Mammary epithelial cell (primary cell): ENCODE measurements at regions of chr15 and their contacts with region 1.

Region 1: DNA sequence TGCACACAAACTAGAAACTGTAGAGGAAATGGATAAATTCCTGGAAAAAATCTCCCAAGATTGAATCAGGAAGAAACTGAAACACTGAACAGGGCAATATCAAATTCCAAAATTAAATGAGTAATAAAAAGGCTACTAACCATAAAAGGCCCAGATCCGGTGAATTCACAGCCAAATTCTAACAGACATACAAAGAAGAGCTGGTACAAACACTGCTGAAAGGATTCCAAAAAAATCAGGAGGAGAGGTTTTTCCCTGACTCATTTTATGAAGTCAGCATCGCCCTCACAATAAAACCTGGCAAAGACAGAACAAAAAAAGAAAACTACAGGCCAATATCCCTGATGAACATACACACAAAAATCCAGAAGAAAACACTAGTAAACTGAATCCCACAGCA is 462.4 kb upstream of the THBS1 start:
- DNase-seq: peak; percentile 85
- H3K4me3 ChIP-seq: no peak overlapping the region
- H3K27ac ChIP-seq: peak overlapping the region; percentile 43
- H3K4me1 ChIP-seq: peaks cover 31% of the 10 kb centered on the region
- H3K27me3 ChIP-seq: no peaks in the 10 kb centered on the region
- CTCF ChIP-seq: no peak

Region 2: GRCh38 chr15:38972831-38973230 is 145.7 kb before region 1 on chr15:
- CTCF ChIA-PET with region 1: no interaction called
- dilution Hi-C with region 1: no loop called
- in situ Hi-C with region 1: no loop called
- intact Hi-C with region 1: no loop called
- DNase-seq: no peak
- H3K4me3 ChIP-seq: no peak overlapping the region
- H3K27ac ChIP-seq: no peak overlapping the region
- H3K4me1 ChIP-seq: peaks cover 6% of the 10 kb centered on the region
- H3K27me3 ChIP-seq: no peaks in the 10 kb centered on the region
- CTCF ChIP-seq: no peak

Region 3: GRCh38 chr15:38996111-38996631 is 122.3 kb before region 1 on chr15:
- CTCF ChIA-PET with region 1: interaction called, 3 read pairs
- dilution Hi-C with region 1: no loop called
- in situ Hi-C with region 1: no loop called
- intact Hi-C with region 1: loop called (anchors 5 kb)
- DNase-seq: peak; percentile 73
- H3K4me3 ChIP-seq: no peak overlapping the region
- H3K27ac ChIP-seq: peak overlapping the region; percentile 66
- H3K4me1 ChIP-seq: peaks cover 27% of the 10 kb centered on the region
- H3K27me3 ChIP-seq: no peaks in the 10 kb centered on the region
- CTCF ChIP-seq: no peak